Ascending aorta (tissue), 2 donors: ENCODE measurements at regions of chr3 and their contacts with region 1.

Region 1: GRCh38 chr3:168165390-168166269 is 69.9 kb upstream of the GOLIM4 start:
- DNase-seq: peak in 1 of 2 donors; percentile 77
- H3K4me3 ChIP-seq: no peak overlapping the region
- H3K27ac ChIP-seq: no peak overlapping the region
- H3K4me1 ChIP-seq: no peaks in the 10 kb centered on the region
- H3K27me3 ChIP-seq: no peaks in the 10 kb centered on the region
- CTCF ChIP-seq: peak; percentile 71 to 84 (median 75)

Region 2: DNA sequence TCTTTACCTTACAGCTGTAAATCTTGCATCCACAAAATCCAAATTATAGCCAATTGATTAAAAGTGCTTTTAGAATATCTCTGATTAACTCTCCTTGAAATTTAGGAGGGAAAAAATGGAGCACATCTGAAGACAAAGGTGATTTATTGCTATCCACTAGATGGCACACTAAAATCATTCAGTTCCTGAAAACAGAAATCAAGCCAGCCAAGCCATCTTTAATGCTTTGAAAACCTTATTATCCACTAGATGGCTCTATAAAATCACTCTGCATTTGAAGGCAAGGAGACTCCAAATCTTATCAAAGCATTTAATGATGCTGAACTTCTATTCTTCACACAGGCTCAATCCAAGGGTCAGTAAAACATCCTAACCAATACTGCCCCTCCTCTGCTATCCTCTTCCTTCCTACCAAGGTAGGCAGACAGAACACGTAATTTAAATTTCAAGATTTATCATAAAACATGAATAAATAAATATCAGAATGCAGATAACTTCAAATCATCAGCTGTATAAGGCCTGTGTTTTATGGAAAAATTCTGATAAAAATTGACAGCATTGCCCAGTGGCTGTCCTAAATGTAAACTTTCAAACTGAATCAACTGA is 118.3 kb before region 1 on chr3:
- intact Hi-C with region 1: loop called (anchors 1 kb)
- DNase-seq: no peak
- H3K4me3 ChIP-seq: no peak overlapping the region
- H3K27ac ChIP-seq: no peak overlapping the region
- H3K4me1 ChIP-seq: peaks cover 0 to 19% of the 10 kb centered on the region in 2 donors
- H3K27me3 ChIP-seq: no peaks in the 10 kb centered on the region
- CTCF ChIP-seq: peak; percentile 72 to 89 (median 82)

Region 3: GRCh38 chr3:168249550-168250414 is 84.2 kb after region 1 on chr3:
- intact Hi-C with region 1: no loop called
- DNase-seq: peak in 1 of 2 donors; percentile 73
- H3K4me3 ChIP-seq: peak overlapping the region; percentile 68 to 78
- H3K27ac ChIP-seq: peak overlapping the region in 1 of 2 donors; percentile 49
- H3K4me1 ChIP-seq: peaks cover 0 to 11% of the 10 kb centered on the region in 2 donors
- H3K27me3 ChIP-seq: no peaks in the 10 kb centered on the region
- CTCF ChIP-seq: peak in 1 of 3 experiments; percentile 20

Region 4: DNA sequence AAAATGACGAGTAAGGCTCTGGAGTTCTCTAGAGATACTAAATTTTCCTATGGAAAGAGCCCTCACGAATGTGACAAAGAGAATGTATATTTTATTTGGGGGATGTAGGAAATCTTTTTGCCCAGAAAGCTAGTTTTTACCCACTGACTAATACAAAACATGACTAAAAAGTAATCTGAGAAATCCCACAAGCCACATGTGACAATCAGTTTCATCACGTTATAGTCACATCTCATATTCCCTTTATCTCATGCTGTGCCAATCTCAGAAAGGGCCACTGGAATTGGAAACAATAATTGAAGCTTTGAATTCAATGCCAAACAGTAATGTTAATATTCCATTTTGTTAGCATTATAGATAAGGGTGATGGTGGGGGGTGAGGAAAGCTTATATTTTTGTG is 439.1 kb after region 1 on chr3:
- intact Hi-C with region 1: no loop called
- DNase-seq: no peak
- H3K4me3 ChIP-seq: no peak overlapping the region
- H3K27ac ChIP-seq: no peak overlapping the region
- H3K4me1 ChIP-seq: no peaks in the 10 kb centered on the region
- H3K27me3 ChIP-seq: no peaks in the 10 kb centered on the region
- CTCF ChIP-seq: no peak